Prostate gland (tissue), 2 donors: ENCODE measurements at regions of chr10 and their contacts with region 1.

Region 1: DNA sequence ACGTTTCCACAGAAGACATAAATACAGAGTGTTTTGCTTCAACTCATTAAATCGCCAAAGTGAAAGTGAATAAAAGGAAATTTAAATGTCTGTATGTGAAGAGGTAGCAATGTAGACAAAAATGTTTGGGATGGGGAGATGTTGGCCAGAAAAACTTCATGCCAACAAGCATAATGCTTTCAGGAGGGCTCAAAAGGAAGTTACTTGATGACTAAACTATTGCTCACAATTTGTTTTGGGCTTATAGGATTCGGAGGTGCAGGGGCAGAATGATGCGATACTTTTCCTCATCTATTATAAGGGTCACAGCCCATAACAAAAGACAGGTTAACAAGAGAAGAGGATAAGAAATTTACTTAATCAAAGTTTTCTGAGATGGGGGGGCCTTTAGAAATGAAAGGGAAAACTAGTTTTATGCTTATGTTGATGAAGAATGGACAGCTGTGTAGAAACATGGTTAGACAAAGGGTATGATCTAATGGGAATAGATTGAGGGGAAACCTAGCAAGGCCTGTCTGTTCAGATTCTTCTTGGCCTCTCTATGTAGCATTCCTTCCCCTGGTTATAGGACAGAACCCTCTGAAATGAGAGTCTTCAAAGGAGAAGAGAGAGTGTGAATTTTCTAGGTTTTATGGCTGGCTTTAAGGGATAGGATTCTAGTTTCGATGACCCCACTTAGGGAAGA is 898.6 kb downstream of the LRMDA start:
- DNase-seq: no peak
- H3K4me3 ChIP-seq: no peak overlapping the region
- H3K27ac ChIP-seq: no peak overlapping the region
- H3K4me1 ChIP-seq: no peaks in the 10 kb centered on the region
- H3K27me3 ChIP-seq: no peaks in the 10 kb centered on the region
- CTCF ChIP-seq: no peak
- POLR2A ChIP-seq: no peak

Region 2: GRCh38 chr10:75487087-75487754 is 842.8 kb before region 1 on chr10:
- intact Hi-C with region 1: no loop called
- DNase-seq: no peak
- H3K4me3 ChIP-seq: no peak overlapping the region
- H3K27ac ChIP-seq: no peak overlapping the region
- H3K4me1 ChIP-seq: no peaks in the 10 kb centered on the region
- H3K27me3 ChIP-seq: no peaks in the 10 kb centered on the region
- CTCF ChIP-seq: no peak
- POLR2A ChIP-seq: no peak

Region 3: DNA sequence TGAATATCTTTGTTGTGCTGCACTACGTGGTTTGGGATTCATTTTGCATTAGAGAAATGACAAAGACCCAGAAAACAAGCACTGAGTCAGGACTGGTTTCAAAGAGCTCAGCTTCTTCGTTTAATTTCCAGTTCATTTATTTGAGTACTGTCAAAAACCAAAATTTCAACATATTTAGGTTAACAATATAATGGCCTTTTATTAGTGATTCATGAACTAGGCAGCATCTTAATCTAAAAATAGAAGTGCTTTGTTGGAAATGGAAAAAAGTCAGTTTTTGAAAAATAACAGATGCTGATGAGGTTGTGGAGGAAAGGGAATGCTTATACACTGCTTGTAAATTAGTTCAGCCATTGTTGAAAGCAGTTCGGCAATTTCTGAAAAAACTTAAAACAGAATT is 42.2 kb before region 1 on chr10:
- intact Hi-C with region 1: no loop called
- DNase-seq: no peak
- H3K4me3 ChIP-seq: no peak overlapping the region
- H3K27ac ChIP-seq: no peak overlapping the region
- H3K4me1 ChIP-seq: no peaks in the 10 kb centered on the region
- H3K27me3 ChIP-seq: no peaks in the 10 kb centered on the region
- CTCF ChIP-seq: no peak
- POLR2A ChIP-seq: no peak

Region 4: GRCh38 chr10:76397181-76397881 is 67.3 kb after region 1 on chr10:
- intact Hi-C with region 1: loop called (anchors 5 kb)
- DNase-seq: peak; percentile 13
- H3K4me3 ChIP-seq: no peak overlapping the region
- H3K27ac ChIP-seq: peak overlapping the region; percentile 44 to 59
- H3K4me1 ChIP-seq: peaks cover 7% of the 10 kb centered on the region
- H3K27me3 ChIP-seq: no peaks in the 10 kb centered on the region
- CTCF ChIP-seq: no peak
- POLR2A ChIP-seq: no peak